Naive thymus-derived CD4-positive, alpha-beta T cell (primary cell): ENCODE measurements at regions of chr1 and their contacts with region 1.

Region 1: DNA sequence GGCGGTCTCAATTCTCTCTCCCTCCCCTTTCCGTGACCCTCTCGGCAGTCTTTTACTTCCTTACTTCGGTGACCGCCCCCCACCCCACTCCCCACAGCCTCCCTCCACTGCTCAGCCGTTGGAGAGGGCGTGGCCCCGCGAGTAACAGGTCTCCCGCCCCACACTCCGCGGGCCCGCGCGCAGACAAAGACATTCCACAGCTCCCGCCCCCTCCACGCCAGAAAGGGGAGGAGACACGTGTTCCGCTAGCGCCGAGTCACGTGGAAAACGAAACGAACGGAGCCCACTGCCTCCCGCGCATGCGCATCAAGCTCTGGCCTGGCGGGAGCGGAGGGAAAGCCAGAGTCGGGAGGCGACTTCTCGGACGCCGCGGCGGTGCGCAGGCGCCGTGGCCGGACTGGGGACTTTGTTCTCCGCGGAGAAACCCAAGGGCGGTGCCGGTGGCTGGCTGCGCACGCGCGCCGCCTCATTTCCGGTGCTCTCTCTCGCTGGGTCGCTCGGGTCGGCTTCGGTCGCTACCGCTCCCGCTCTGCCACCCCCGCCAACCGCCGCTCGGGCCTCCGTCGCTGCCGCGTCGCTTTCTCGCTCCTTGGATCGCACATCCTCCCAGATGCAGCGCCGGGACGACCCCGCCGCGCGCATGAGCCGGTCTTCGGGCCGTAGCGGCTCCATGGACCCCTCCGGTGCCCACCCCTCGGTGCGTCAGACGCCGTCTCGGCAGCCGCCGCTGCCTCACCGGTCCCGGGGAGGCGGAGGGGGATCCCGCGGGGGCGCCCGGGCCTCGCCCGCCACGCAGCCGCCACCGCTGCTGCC is at the start of gene KHDRBS1:
- DNase-seq: peak; percentile 94 to 99 (median 98)
- ATAC-seq: peak; percentile 93
- H3K4me3 ChIP-seq: peak within 1 kb of the TSS; percentile 98
- H3K4me3 Mint-ChIP-seq: peak within 1 kb of the TSS; percentile 89 to 98 (median 96)
- H3K27ac ChIP-seq: peak within 1 kb of the TSS; percentile 96
- H3K27ac Mint-ChIP-seq: peak within 1 kb of the TSS; percentile 90 to 99 (median 97)
- H3K4me1 ChIP-seq: peaks cover 10 to 14% of the 10 kb centered on the region in 2 donors
- H3K4me1 Mint-ChIP-seq: peaks cover 17 to 45% (median 31%) of the 10 kb centered on the region in 7 donors
- H3K27me3 ChIP-seq: no peaks in the 10 kb centered on the region
- H3K27me3 Mint-ChIP-seq: peaks cover 0 to 2% (median 0%) of the 10 kb centered on the region in 5 donors
- total RNA-seq, gene KHDRBS1: 89.2 to 162 (median 125) TPM

Region 2: GRCh38 chr1:31789259-31790065 is 224.1 kb before region 1 on chr1:
- CTCF ChIA-PET with region 1: no interaction called
- POLR2A ChIA-PET with region 1: interaction called, 4 read pairs
- intact Hi-C with region 1: loop called (anchors 1 kb)
- DNase-seq: peak; percentile 81 to 99 (median 90)
- ATAC-seq: peak; percentile 88
- H3K4me3 ChIP-seq: peak overlapping the region; percentile 68
- H3K4me3 Mint-ChIP-seq: peak overlapping the region; percentile 81 to 93 (median 92)
- H3K27ac ChIP-seq: peak overlapping the region; percentile 82
- H3K27ac Mint-ChIP-seq: peak overlapping the region in 6 of 9 donors; percentile 56 to 94 (median 84)
- H3K4me1 ChIP-seq: peaks cover 3 to 5% of the 10 kb centered on the region in 2 donors
- H3K4me1 Mint-ChIP-seq: peaks cover 7 to 17% (median 9%) of the 10 kb centered on the region in 7 donors
- H3K27me3 ChIP-seq: no peaks in the 10 kb centered on the region
- H3K27me3 Mint-ChIP-seq: peaks cover 0 to 7% (median 0%) of the 10 kb centered on the region in 5 donors

Region 3: GRCh38 chr1:31944205-31945089 is 69.1 kb before region 1 on chr1:
- CTCF ChIA-PET with region 1: no interaction called
- POLR2A ChIA-PET with region 1: interaction called, 16 read pairs
- intact Hi-C with region 1: loop called in 1 of 2 experiments (anchors 2 kb)
- DNase-seq: peak; percentile 48 to 88 (median 87)
- ATAC-seq: peak; percentile 81
- H3K4me3 ChIP-seq: peak overlapping the region; percentile 68
- H3K4me3 Mint-ChIP-seq: peak overlapping the region; percentile 83 to 93 (median 89)
- H3K27ac ChIP-seq: peak overlapping the region; percentile 76
- H3K27ac Mint-ChIP-seq: peak overlapping the region; percentile 92 to 97 (median 94)
- H3K4me1 ChIP-seq: peaks cover 45 to 46% of the 10 kb centered on the region in 2 donors
- H3K4me1 Mint-ChIP-seq: peaks cover 33 to 64% (median 47%) of the 10 kb centered on the region in 7 donors
- H3K27me3 ChIP-seq: no peaks in the 10 kb centered on the region
- H3K27me3 Mint-ChIP-seq: no peaks in the 10 kb centered on the region

Region 4: GRCh38 chr1:32063261-32063681 is 49.7 kb after region 1 on chr1:
- CTCF ChIA-PET with region 1: interaction called, 4 read pairs
- POLR2A ChIA-PET with region 1: interaction called, 4 read pairs
- intact Hi-C with region 1: loop called in 1 of 2 experiments (anchors 2 kb)
- DNase-seq: peak in 6 of 9 donors; percentile 12 to 46 (median 35)
- ATAC-seq: peak; percentile 60
- H3K4me3 ChIP-seq: no peak overlapping the region
- H3K4me3 Mint-ChIP-seq: no peak overlapping the region
- H3K27ac ChIP-seq: no peak overlapping the region
- H3K27ac Mint-ChIP-seq: peak overlapping the region in 8 of 9 donors; percentile 8 to 79 (median 68)
- H3K4me1 ChIP-seq: peaks cover 4 to 5% of the 10 kb centered on the region in 2 donors
- H3K4me1 Mint-ChIP-seq: peaks cover 10 to 19% (median 12%) of the 10 kb centered on the region in 7 donors
- H3K27me3 ChIP-seq: no peaks in the 10 kb centered on the region
- H3K27me3 Mint-ChIP-seq: no peaks in the 10 kb centered on the region

Region 5: DNA sequence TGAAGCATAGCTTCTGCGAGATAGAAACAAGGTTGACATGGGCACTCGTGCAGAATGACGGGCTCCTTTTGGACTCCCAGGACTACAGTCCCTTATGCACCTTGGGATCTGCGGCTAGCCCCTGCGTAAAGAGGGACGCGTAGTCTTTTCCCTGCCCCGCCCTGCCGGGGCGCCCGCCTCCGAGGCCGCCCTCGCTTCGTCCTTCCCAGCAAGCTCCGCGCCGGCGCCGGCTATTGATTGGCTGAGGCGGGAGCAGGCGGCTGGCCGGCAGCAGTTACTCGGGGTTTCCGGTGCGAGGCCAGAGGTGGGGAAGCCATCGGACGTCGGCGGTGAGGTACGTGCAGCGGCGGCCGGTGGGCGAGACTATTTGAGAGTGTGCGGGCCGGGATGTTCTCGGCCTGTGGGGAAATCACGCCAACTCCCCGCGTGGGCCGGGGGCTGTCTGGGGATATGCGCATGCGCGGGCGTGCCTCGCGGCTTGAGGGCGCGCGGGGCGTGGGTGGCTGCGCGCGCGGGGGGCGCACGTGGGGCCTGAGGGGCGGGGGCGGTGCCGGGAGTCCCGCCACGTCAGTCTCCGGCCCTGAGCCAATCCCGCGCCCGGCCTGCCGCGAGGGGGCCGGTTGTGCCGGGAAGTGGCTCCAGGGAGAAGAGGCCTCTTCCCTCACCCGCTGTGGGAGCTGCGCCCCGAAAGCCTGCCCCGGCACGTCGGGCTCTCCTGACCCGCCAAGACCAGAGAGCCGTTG is 166.0 kb after region 1 on chr1 and contains the start of gene TXLNA:
- CTCF ChIA-PET with region 1: no interaction called
- POLR2A ChIA-PET with region 1: no interaction called
- intact Hi-C with region 1: loop called in 1 of 2 experiments (anchors 2 kb)
- DNase-seq: peak; percentile 80 to 93 (median 86)
- ATAC-seq: peak; percentile 91
- H3K4me3 ChIP-seq: peak within 1 kb of the TSS; percentile 89
- H3K4me3 Mint-ChIP-seq: peak within 1 kb of the TSS; percentile 86 to 94 (median 91)
- H3K27ac ChIP-seq: peak within 1 kb of the TSS; percentile 89
- H3K27ac Mint-ChIP-seq: peak within 1 kb of the TSS; percentile 84 to 98 (median 92)
- H3K4me1 ChIP-seq: peaks cover 17 to 21% of the 10 kb centered on the region in 2 donors
- H3K4me1 Mint-ChIP-seq: peaks cover 22 to 45% (median 38%) of the 10 kb centered on the region in 7 donors
- H3K27me3 ChIP-seq: no peaks in the 10 kb centered on the region
- H3K27me3 Mint-ChIP-seq: no peaks in the 10 kb centered on the region
- total RNA-seq, gene TXLNA: 16.7 to 83.3 (median 36.3) TPM

Region 6: GRCh38 chr1:32351399-32352238 is 338.0 kb after region 1 on chr1:
- CTCF ChIA-PET with region 1: no interaction called
- POLR2A ChIA-PET with region 1: no interaction called
- intact Hi-C with region 1: loop called in 1 of 2 experiments (anchors 1 kb)
- DNase-seq: peak; percentile 83 to 93 (median 92)
- ATAC-seq: peak; percentile 97
- H3K4me3 ChIP-seq: peak overlapping the region; percentile 62
- H3K4me3 Mint-ChIP-seq: peak overlapping the region; percentile 68 to 90 (median 85)
- H3K27ac ChIP-seq: peak overlapping the region; percentile 75
- H3K27ac Mint-ChIP-seq: peak overlapping the region; percentile 63 to 96 (median 91)
- H3K4me1 ChIP-seq: peaks cover 4 to 19% of the 10 kb centered on the region in 2 donors
- H3K4me1 Mint-ChIP-seq: peaks cover 35 to 65% (median 53%) of the 10 kb centered on the region in 7 donors
- H3K27me3 ChIP-seq: no peaks in the 10 kb centered on the region
- H3K27me3 Mint-ChIP-seq: peaks cover 0 to under 1% (median 0%) of the 10 kb centered on the region in 5 donors